ENCODE measurements at regions of chr12 and their contacts with region 1.

Region 1: GRCh38 chr12:85920324-85920947 is 46.3 kb downstream of the NTS start:
- DNase-seq: no peak
- ATAC-seq: no peak
- H3K4me3 ChIP-seq: no peak overlapping the region
- H3K27ac ChIP-seq: no peak overlapping the region
- H3K4me1 ChIP-seq: no peaks in the 10 kb centered on the region
- H3K27me3 ChIP-seq: no peaks in the 10 kb centered on the region
- CTCF ChIP-seq: peak; percentile 66

Region 2: GRCh38 chr12:86331012-86331411 is 410.6 kb after region 1 on chr12:
- intact Hi-C with region 1: no loop called
- DNase-seq: no peak
- ATAC-seq: no peak
- H3K4me3 ChIP-seq: no peak overlapping the region
- H3K27ac ChIP-seq: no peak overlapping the region
- H3K4me1 ChIP-seq: no peaks in the 10 kb centered on the region
- H3K27me3 ChIP-seq: no peaks in the 10 kb centered on the region
- CTCF ChIP-seq: no peak

Region 3: DNA sequence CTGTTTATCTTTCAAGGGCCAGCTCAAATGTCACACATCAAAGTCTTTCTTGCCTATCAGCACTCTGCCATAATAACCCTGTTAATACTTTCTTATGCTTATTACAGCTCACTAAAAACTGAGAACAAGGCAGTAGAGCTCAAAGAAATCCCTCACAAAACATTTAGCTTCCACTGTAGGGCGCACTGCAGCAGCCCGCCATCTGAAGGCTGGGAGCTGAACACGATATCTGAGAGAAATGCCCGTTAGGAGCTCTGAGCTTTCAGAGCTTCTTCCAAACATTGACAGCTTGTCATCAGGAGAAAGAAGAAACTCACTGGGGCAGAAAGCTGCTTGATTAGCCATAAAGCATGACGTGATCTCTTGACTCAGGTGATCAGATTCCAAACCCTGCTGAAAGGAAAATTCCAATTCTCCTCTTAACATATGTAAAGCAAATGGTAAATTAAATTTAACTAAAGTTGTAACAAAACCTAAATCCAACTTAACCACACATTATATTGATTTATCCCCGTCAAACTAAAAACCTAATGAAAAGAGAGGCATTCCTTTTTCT is 1933.1 kb after region 1 on chr12:
- intact Hi-C with region 1: loop called (anchors 10 kb)
- DNase-seq: no peak
- ATAC-seq: no peak
- H3K4me3 ChIP-seq: no peak overlapping the region
- H3K27ac ChIP-seq: no peak overlapping the region
- H3K4me1 ChIP-seq: no peaks in the 10 kb centered on the region
- H3K27me3 ChIP-seq: no peaks in the 10 kb centered on the region
- CTCF ChIP-seq: no peak